ENCODE measurements at regions of chr2 and their contacts with region 1.

Region 1: DNA sequence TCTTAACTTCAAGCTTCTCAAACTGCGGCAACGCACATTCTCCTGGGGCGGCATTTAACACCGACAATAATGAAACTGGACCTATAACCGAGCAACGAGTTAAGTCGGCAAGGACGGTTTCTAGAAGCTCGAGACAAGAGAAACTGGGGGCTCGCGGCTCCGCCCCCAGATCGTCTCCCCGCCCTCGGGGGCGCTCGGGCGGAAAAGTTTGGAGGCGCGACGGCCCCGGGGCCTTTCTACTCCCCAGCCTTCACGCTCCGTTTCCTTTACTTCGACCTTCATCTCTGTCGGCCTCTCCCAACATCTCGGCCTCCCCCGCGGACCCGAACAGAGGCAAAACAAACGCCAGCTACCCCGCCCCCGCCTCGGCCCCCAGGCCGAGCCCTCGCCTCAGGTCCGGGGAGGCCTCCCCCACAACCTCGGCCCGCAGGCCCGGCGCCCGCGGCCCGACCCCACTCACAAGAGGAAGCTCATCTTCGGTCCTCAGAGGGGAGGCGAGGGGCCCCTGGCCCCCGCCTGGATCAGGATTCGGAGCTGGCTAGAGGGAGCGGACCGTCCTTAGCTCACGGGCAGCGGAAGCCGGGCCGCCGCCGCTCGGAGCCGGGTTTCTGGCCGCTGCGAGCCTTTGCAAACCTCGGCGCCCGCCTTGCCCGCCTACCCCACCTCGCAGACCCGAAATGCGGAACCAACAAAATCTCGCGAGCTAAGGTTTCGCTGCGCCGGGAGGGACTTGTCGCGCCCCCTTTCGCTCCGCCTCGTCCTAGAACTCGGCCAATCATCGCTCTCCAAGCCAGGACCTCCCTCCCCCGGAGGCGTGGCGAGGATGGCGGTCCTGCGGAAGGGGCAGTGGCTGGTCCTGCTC is at the start of gene MOB1A:
- DNase-seq: peak; percentile 99
- ATAC-seq: peak; percentile 96
- H3K4me3 Mint-ChIP-seq: peak within 1 kb of the TSS; percentile 89
- H3K27ac Mint-ChIP-seq: peak within 1 kb of the TSS; percentile 95
- H3K4me1 Mint-ChIP-seq: peaks cover 43% of the 10 kb centered on the region
- H3K27me3 Mint-ChIP-seq: no peaks in the 10 kb centered on the region
- total RNA-seq, gene MOB1A: 191 to 208 TPM

Region 2: GRCh38 chr2:74119912-74120825 is 58.3 kb before region 1 on chr2:
- CTCF ChIA-PET with region 1: interaction called, 11 read pairs
- POLR2A ChIA-PET with region 1: interaction called, 8 read pairs
- DNase-seq: peak; percentile 88
- ATAC-seq: peak; percentile 97
- H3K4me3 Mint-ChIP-seq: peak overlapping the region; percentile 82
- H3K27ac Mint-ChIP-seq: peak overlapping the region; percentile 96
- H3K4me1 Mint-ChIP-seq: peaks cover 11% of the 10 kb centered on the region
- H3K27me3 Mint-ChIP-seq: peaks cover 2% of the 10 kb centered on the region

Region 3: GRCh38 chr2:74147727-74148456 is 30.5 kb before region 1 on chr2 and contains the start of gene BOLA3:
- CTCF ChIA-PET with region 1: interaction called, 43 read pairs
- POLR2A ChIA-PET with region 1: interaction called, 47 read pairs
- DNase-seq: peak; percentile 88
- ATAC-seq: peak; percentile 97
- H3K4me3 Mint-ChIP-seq: no peak within 1 kb of the TSS
- H3K27ac Mint-ChIP-seq: no peak within 1 kb of the TSS
- H3K4me1 Mint-ChIP-seq: peaks cover 9% of the 10 kb centered on the region
- H3K27me3 Mint-ChIP-seq: no peaks in the 10 kb centered on the region
- total RNA-seq, gene BOLA3: 79.7 to 85.4 TPM

Region 4: GRCh38 chr2:74155830-74156229 is 22.6 kb before region 1 on chr2:
- CTCF ChIA-PET with region 1: interaction called, 43 read pairs
- POLR2A ChIA-PET with region 1: interaction called, 47 read pairs
- DNase-seq: no peak
- ATAC-seq: no peak
- H3K4me3 Mint-ChIP-seq: no peak overlapping the region
- H3K27ac Mint-ChIP-seq: no peak overlapping the region
- H3K4me1 Mint-ChIP-seq: peaks cover 12% of the 10 kb centered on the region
- H3K27me3 Mint-ChIP-seq: no peaks in the 10 kb centered on the region

Region 5: DNA sequence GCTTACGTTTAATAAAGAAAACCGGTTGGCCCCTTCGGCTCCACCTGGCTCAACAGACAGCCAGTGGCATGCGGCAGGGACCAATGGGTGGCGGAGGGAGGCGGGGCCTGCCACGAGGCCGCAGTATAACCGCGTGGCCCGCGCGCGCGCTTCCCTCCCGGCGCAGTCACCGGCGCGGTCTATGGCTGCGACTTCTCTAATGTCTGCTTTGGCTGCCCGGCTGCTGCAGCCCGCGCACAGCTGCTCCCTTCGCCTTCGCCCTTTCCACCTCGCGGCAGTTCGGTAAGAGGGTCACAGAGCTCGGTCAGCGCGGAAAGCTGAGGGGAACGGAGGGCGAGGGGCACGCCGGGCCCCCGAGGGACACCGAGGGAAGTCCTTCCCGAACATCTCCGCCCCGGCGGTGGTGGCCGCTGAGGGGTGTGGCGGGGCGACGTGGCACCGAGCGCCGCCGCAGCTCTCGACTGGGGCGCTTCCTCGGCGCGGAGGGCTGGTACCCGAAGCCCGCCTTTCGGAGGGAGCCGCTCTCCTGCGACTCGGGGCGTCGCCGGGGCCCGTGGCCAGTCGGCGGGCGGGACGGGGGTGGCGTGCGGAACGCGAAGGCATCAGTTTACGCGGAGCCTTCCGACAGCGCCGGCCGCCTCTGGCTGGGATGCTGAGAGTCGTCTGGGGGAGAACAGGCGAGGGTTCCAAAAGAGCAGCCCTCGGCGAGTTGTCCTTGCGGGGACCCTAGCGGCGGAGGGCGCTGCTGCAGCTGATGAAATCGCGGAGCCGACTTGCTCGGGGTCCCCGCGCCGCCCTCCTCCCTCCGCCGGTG is 20.2 kb after region 1 on chr2 and contains the start of gene MTHFD2:
- CTCF ChIA-PET with region 1: interaction called, 92 read pairs
- POLR2A ChIA-PET with region 1: interaction called, 140 read pairs
- DNase-seq: peak; percentile 95
- ATAC-seq: peak; percentile 92
- H3K4me3 Mint-ChIP-seq: peak within 1 kb of the TSS; percentile 97
- H3K27ac Mint-ChIP-seq: peak within 1 kb of the TSS; percentile 100
- H3K4me1 Mint-ChIP-seq: peaks cover 45% of the 10 kb centered on the region
- H3K27me3 Mint-ChIP-seq: no peaks in the 10 kb centered on the region
- total RNA-seq, gene MTHFD2: 162 to 164 TPM

Region 6: DNA sequence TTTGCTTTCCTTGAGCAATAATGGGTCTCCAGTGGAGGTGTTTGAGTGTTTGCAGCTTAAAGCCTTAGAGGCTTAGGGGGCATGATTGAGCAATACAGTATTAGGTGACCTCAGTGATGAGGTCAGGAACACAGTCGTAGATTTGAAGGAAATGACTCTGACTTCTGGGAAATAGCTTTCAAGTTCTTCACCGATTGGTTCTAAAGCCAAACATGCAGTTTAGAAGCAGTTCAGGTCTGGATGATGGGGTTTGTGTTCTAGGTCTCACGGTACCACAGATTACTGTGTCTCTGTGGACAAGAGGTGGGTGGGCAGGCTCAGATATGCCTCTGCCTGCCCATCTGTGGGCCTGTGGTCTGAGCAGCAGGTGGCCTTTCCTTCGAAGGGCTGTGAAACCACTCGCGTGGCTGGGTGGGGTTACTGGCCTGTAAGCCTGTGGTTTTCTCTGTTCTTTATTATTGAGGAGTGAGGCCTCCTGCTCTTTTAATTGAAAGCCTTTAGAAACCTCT is 27.8 kb after region 1 on chr2:
- CTCF ChIA-PET with region 1: interaction called, 92 read pairs
- POLR2A ChIA-PET with region 1: interaction called, 140 read pairs
- DNase-seq: peak; percentile 68
- ATAC-seq: peak; percentile 81
- H3K4me3 Mint-ChIP-seq: peak overlapping the region; percentile 70
- H3K27ac Mint-ChIP-seq: peak overlapping the region; percentile 95
- H3K4me1 Mint-ChIP-seq: peaks cover 70% of the 10 kb centered on the region
- H3K27me3 Mint-ChIP-seq: no peaks in the 10 kb centered on the region

Region 7: GRCh38 chr2:74317701-74318301 is 139.4 kb after region 1 on chr2:
- CTCF ChIA-PET with region 1: no interaction called
- POLR2A ChIA-PET with region 1: no interaction called
- DNase-seq: no peak
- ATAC-seq: no peak
- H3K4me3 Mint-ChIP-seq: no peak overlapping the region
- H3K27ac Mint-ChIP-seq: no peak overlapping the region
- H3K4me1 Mint-ChIP-seq: no peaks in the 10 kb centered on the region
- H3K27me3 Mint-ChIP-seq: peaks cover 2% of the 10 kb centered on the region

Region 8: DNA sequence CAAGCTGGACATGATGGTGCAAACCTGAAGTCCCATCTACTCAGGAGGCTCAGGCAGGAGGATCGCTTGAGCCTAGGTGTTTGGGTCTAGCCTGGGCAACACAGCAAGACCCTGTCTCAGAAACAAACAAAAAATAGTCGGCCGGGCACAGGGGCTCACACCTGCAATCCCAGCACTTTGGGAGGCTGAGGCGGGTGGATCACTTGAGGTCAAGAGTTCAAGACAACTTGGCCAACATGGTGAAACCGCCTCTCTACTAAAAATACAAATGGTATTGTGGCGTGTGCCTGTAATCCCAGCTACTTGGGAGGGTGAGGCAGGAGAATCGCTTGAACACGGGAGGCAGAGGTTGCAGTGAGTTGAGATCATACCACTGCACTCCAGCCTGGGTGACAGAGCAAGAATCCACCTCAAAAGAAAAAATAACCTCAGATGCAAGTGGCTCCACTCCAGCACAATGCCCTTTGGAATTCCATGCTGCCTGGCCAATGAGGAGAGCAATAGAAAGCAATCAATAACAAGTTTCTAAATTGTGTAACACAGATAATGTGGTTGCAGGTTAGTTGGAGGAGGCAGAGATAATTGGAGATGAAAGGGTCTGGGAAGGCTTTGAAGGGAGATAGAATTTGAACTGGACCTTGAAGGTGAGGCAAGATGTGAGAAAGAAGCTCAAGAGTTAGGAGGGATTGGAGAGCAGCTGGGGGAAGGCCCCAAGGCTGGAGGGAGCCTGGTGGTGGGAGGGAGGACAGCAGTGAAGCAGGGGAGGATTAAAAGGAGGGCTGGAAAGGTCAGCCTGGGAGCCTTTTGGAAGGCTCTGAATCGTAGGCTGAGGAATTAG is 310.4 kb after region 1 on chr2:
- CTCF ChIA-PET with region 1: no interaction called
- POLR2A ChIA-PET with region 1: no interaction called
- DNase-seq: no peak
- ATAC-seq: no peak
- H3K4me3 Mint-ChIP-seq: no peak overlapping the region
- H3K27ac Mint-ChIP-seq: no peak overlapping the region
- H3K4me1 Mint-ChIP-seq: peaks cover 7% of the 10 kb centered on the region
- H3K27me3 Mint-ChIP-seq: no peaks in the 10 kb centered on the region